Left lung (tissue), 14 donors: ENCODE measurements at regions of chrX and their contacts with region 1.

Region 1: DNA sequence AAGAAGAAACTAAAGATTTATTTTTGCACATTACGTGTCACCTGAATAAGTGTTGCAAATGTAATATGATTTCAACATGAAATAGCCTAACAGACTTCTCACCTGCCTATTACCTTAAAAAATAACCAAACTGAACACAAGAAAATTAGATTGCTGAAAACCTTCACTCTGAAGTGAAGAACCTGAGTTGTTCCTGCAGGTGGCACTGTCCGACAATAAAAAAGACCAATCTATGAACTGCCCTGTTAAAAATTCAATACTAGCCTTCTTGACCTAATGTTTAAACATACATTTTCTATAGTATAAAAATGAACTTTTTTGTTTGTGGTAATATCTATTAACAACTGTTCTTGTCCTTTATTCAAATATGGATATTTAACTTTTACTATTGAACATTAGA is 69.2 kb upstream of the PNPLA4 start:
- DNase-seq: peak in 2 of 4 donors; percentile 36 to 47
- ATAC-seq: peak; percentile 92
- H3K4me3 ChIP-seq: no peak overlapping the region
- H3K27ac ChIP-seq: no peak overlapping the region
- H3K4me1 ChIP-seq: no peaks in the 10 kb centered on the region
- H3K27me3 ChIP-seq: no peaks in the 10 kb centered on the region
- CTCF ChIP-seq: peak; percentile 33 to 38

Region 2: GRCh38 chrX:7706032-7706431 is 290.4 kb before region 1 on chrX:
- intact Hi-C with region 1: no loop called
- DNase-seq: no peak
- ATAC-seq: no peak
- H3K4me3 ChIP-seq: no peak overlapping the region
- H3K27ac ChIP-seq: no peak overlapping the region
- H3K4me1 ChIP-seq: no peaks in the 10 kb centered on the region
- H3K27me3 ChIP-seq: no peaks in the 10 kb centered on the region
- CTCF ChIP-seq: no peak

Region 3: DNA sequence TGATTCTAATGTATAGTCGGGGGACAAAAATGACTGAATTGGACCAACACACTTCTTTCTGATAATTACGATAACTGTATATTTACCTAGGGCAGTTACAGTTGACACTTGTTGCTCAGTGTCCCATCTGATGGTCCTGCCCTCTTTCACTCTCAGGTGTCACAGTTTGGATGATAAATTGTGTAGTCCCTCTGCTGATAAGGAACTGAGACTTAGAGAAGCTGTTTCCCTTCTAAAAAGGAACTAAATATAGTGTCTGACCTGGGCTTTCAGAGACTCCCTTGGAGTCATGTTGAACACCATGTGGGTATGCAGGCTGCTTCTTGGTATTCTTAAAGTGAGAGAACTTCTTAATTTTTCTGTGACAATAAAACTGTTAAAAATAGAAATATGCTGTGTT is 45.5 kb before region 1 on chrX:
- intact Hi-C with region 1: no loop called
- DNase-seq: no peak
- ATAC-seq: no peak
- H3K4me3 ChIP-seq: no peak overlapping the region
- H3K27ac ChIP-seq: no peak overlapping the region
- H3K4me1 ChIP-seq: no peaks in the 10 kb centered on the region
- H3K27me3 ChIP-seq: no peaks in the 10 kb centered on the region
- CTCF ChIP-seq: no peak

Region 4: GRCh38 chrX:8125566-8125965 is 129.2 kb after region 1 on chrX:
- intact Hi-C with region 1: no loop called
- DNase-seq: no peak
- ATAC-seq: no peak
- H3K4me3 ChIP-seq: no peak overlapping the region
- H3K27ac ChIP-seq: no peak overlapping the region
- H3K4me1 ChIP-seq: no peaks in the 10 kb centered on the region
- H3K27me3 ChIP-seq: no peaks in the 10 kb centered on the region
- CTCF ChIP-seq: no peak

Region 5: DNA sequence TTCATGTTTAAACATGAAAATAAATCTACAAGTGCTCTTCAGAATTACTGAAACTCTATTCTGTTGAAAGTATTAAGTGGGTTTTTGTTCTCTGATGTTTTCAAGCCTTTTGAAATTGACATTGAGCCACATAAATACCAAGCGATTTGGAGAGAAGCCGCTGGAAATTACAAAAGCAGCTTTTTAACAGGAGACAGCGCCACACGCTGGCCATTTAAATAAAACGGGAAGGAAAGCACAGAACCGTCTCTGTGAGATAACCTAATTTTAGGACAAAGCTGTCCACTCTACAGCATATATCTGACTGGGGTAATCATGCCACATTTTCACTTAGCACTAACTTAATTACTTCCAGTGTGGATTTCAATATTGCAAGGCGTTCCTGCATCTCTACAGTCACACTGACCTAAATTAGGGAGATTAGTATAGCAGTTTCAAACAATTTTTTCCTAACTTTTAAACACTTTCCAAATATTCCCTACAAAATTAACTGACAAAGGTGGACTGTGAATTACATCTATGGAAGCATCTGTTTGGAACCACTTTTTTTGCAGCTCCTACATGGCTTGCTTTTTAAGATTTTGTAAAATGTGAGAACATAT is 742.3 kb after region 1 on chrX:
- intact Hi-C with region 1: loop called in 1 of 2 experiments (anchors 5 kb)
- DNase-seq: peak in 2 of 4 donors; percentile 44 to 64
- ATAC-seq: peak; percentile 84
- H3K4me3 ChIP-seq: no peak overlapping the region
- H3K27ac ChIP-seq: no peak overlapping the region
- H3K4me1 ChIP-seq: no peaks in the 10 kb centered on the region
- H3K27me3 ChIP-seq: no peaks in the 10 kb centered on the region
- CTCF ChIP-seq: peak; percentile 38 to 46